ENCODE measurements at regions of chr18 and their contacts with region 1.

Region 1: GRCh38 chr18:31819106-31819924 is 58.6 kb upstream of the SLC25A52 start:
- DNase-seq: peak; percentile 42
- ATAC-seq: no peak
- H3K4me3 ChIP-seq: no peak overlapping the region
- H3K4me3 Mint-ChIP-seq: no peak overlapping the region
- H3K27ac ChIP-seq: no peak overlapping the region
- H3K27ac Mint-ChIP-seq: no peak overlapping the region
- H3K4me1 ChIP-seq: no peaks in the 10 kb centered on the region
- H3K4me1 Mint-ChIP-seq: no peaks in the 10 kb centered on the region
- H3K27me3 ChIP-seq: no peaks in the 10 kb centered on the region
- H3K27me3 Mint-ChIP-seq: peaks cover 6% of the 10 kb centered on the region
- CTCF ChIP-seq: peak; percentile 83

Region 2: DNA sequence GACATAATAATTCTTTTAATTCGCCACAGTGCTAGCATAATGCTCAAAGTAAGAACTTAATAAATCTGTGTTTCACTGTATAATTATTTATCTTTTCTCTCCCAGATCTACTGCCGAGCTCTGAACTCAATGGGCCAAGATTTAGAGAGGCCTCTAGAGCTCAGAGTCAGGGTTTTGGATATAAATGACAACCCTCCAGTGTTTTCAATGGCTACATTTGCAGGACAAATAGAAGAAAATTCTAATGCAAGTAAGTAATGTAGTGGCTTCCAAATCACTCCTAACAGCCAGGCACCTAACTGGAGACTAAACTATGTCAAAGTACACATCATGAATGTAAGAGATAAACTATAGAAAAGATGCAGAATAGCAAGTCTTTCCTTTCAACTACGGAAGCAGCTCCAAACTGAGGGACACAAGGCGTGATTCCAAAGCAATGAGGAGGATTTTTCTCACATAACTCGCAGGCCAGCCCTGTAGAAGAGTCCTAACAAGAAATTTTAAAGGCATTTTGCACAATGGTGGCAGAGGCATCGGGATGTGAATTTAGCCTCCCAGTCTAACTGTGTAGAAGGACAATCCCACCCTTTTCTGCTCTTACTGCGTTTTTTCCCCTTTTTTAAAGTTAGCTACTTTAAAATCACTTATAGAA is 489.4 kb before region 1 on chr18:
- CTCF ChIA-PET with region 1: no interaction called
- POLR2A ChIA-PET with region 1: no interaction called
- intact Hi-C with region 1: no loop called
- DNase-seq: no peak
- ATAC-seq: no peak
- H3K4me3 ChIP-seq: no peak overlapping the region
- H3K4me3 Mint-ChIP-seq: no peak overlapping the region
- H3K27ac ChIP-seq: no peak overlapping the region
- H3K27ac Mint-ChIP-seq: no peak overlapping the region
- H3K4me1 ChIP-seq: no peaks in the 10 kb centered on the region
- H3K4me1 Mint-ChIP-seq: no peaks in the 10 kb centered on the region
- H3K27me3 ChIP-seq: no peaks in the 10 kb centered on the region
- H3K27me3 Mint-ChIP-seq: no peaks in the 10 kb centered on the region
- CTCF ChIP-seq: no peak

Region 3: GRCh38 chr18:31741097-31741735 is 78.1 kb before region 1 on chr18:
- CTCF ChIA-PET with region 1: no interaction called
- POLR2A ChIA-PET with region 1: no interaction called
- intact Hi-C with region 1: loop called (anchors 2 kb)
- DNase-seq: peak; percentile 61
- ATAC-seq: no peak
- H3K4me3 ChIP-seq: no peak overlapping the region
- H3K4me3 Mint-ChIP-seq: no peak overlapping the region
- H3K27ac ChIP-seq: no peak overlapping the region
- H3K27ac Mint-ChIP-seq: no peak overlapping the region
- H3K4me1 ChIP-seq: no peaks in the 10 kb centered on the region
- H3K4me1 Mint-ChIP-seq: no peaks in the 10 kb centered on the region
- H3K27me3 ChIP-seq: no peaks in the 10 kb centered on the region
- H3K27me3 Mint-ChIP-seq: no peaks in the 10 kb centered on the region
- CTCF ChIP-seq: peak; percentile 95

Region 4: DNA sequence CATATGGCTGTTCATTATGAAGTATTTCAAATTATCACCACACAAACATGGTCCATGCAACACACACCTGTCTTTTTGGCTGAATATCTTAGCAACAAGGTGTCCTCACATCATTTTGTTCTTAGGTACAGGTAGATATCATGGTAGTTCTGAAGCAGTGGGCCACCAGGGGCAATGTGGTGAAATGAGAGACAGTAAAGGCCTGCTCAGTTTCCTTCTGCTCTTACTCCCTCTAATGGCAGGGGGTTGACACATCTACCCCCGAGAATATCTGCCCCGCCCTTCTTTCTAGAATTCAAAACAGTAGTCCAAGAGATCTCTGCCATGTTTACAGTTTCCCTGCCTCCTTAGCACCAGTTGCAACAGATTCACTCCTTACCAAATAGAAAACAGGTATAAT is 1100.5 kb after region 1 on chr18:
- CTCF ChIA-PET with region 1: no interaction called
- POLR2A ChIA-PET with region 1: no interaction called
- intact Hi-C with region 1: no loop called
- DNase-seq: peak; percentile 87
- ATAC-seq: peak; percentile 99
- H3K4me3 ChIP-seq: no peak overlapping the region
- H3K4me3 Mint-ChIP-seq: peak overlapping the region; percentile 49
- H3K27ac ChIP-seq: peak overlapping the region in 1 of 2 donors; percentile 24
- H3K27ac Mint-ChIP-seq: no peak overlapping the region
- H3K4me1 ChIP-seq: peaks cover 43 to 52% of the 10 kb centered on the region in 2 donors
- H3K4me1 Mint-ChIP-seq: peaks cover 44% of the 10 kb centered on the region
- H3K27me3 ChIP-seq: no peaks in the 10 kb centered on the region
- H3K27me3 Mint-ChIP-seq: no peaks in the 10 kb centered on the region
- CTCF ChIP-seq: peak; percentile 97